ENCODE measurements at regions of chr17 and their contacts with region 1.

Region 1: GRCh38 chr17:3004133-3004801 is 59.1 kb downstream of the OR1D5 start:
- DNase-seq: peak; percentile 89 to 99
- H3K4me3 ChIP-seq: peak overlapping the region; percentile 6; the same call in 1 of the 2 replicates
- H3K27ac ChIP-seq: peak overlapping the region; percentile 65
- H3K4me1 ChIP-seq: peaks cover 22% of the 10 kb centered on the region
- H3K27me3 ChIP-seq: no peaks in the 10 kb centered on the region
- CTCF ChIP-seq: no peak

Region 2: DNA sequence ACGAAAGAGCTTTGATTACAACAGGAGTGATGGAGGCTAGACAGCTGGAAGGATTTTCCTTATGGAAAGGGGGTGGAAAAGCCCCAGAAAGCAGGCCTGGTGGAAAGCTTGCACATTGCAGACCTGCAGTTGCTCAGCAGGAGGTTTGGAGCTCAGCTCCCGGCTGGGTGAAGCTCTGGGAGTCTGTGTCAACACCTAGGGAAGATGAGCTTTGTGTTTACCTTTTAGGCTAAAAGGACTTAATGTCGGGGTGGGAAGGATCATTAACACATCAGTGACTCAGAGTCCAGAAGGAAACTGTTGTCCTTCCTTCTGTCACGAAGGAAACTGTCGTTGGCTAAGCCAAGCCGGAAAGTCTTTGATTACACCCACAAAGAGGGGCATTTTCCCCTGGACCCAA is 159.9 kb before region 1 on chr17:
- CTCF ChIA-PET with region 1: interaction called, 3 read pairs
- POLR2A ChIA-PET with region 1: no interaction called
- intact Hi-C with region 1: loop called (anchors 2 kb)
- DNase-seq: peak in 1 of 2 experiments; percentile 49
- H3K4me3 ChIP-seq: no peak overlapping the region
- H3K27ac ChIP-seq: no peak overlapping the region
- H3K4me1 ChIP-seq: 0 out of 2 replicates have a peak, but pooled peaks cover 9% of the 10 kb centered on the region
- H3K27me3 ChIP-seq: no peaks in the 10 kb centered on the region
- CTCF ChIP-seq: no peak

Region 3: DNA sequence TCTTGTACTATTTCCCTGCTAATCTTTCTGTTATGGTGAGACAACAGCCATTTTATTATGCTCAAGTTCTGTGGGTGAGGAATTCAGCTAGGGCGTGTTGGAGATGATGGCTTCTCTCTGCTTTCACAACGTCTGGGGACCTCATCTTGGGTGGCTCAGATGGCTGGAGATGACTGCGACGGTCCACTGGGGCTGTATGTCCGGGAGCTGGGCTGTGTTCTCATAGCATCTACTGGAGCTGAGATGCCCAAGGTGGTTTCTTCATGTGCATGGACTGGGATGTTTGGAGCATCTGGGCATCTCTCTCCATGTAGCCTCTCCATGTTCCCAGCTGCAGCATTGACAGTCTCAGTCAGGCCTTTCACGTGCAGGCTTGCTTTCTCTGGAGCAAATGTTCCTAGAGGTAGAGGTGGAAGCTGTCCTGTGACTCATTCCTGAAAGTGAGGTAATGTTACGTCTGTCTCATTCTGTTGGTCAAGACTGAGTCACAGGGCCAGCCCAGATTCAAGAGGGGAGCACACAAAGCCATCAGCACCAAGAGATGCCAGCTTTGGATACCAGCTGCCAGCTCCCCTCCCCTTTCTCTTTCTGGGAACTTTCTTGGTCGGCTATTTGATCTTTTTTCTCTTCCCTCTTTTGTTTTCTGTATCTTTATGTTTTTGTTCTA is 111.8 kb before region 1 on chr17:
- CTCF ChIA-PET with region 1: interaction called, 6 read pairs
- POLR2A ChIA-PET with region 1: no interaction called
- intact Hi-C with region 1: loop called (anchors 1 kb)
- DNase-seq: peak; percentile 77 to 90
- H3K4me3 ChIP-seq: no peak overlapping the region
- H3K27ac ChIP-seq: peak overlapping the region; percentile 84
- H3K4me1 ChIP-seq: peaks cover 44% of the 10 kb centered on the region
- H3K27me3 ChIP-seq: no peaks in the 10 kb centered on the region
- CTCF ChIP-seq: no peak

Region 4: DNA sequence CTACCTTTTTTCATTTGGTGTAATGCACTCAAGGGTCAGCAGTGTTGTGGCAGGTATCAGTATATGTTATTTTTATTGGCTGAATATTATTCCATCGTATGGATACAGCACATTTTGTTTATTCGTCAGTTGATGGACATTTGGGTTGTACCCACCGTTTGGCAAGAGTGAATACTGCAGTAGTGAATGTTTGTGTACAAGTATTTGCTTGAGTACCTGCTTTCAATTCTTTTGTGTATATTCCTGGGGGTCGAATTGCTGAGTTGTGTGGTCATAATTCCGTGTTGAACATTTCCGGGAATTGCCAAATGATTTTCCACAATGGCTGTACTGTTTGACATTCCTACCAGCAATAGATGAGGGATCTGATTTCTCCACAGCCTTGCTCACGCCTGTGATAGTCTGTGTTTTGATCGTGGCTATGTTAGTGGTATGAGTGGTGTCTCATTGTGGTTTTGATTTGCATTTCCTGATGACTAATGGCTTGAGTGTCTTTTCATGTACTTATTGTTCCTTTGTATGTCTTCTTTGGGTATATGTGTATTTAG is 49.3 kb before region 1 on chr17:
- CTCF ChIA-PET with region 1: no interaction called
- POLR2A ChIA-PET with region 1: interaction called, 3 read pairs
- intact Hi-C with region 1: loop called (anchors 1 kb)
- DNase-seq: peak; percentile 80 to 99
- H3K4me3 ChIP-seq: no peak overlapping the region
- H3K27ac ChIP-seq: peak overlapping the region; percentile 77
- H3K4me1 ChIP-seq: peaks cover 47% of the 10 kb centered on the region
- H3K27me3 ChIP-seq: no peaks in the 10 kb centered on the region
- CTCF ChIP-seq: no peak

Region 5: GRCh38 chr17:2982854-2983253 is 21.4 kb before region 1 on chr17:
- CTCF ChIA-PET with region 1: no interaction called
- POLR2A ChIA-PET with region 1: no interaction called
- intact Hi-C with region 1: no loop called
- DNase-seq: no peak
- H3K4me3 ChIP-seq: no peak overlapping the region
- H3K27ac ChIP-seq: no peak overlapping the region
- H3K4me1 ChIP-seq: no peaks in the 10 kb centered on the region
- H3K27me3 ChIP-seq: no peaks in the 10 kb centered on the region
- CTCF ChIP-seq: no peak

Region 6: DNA sequence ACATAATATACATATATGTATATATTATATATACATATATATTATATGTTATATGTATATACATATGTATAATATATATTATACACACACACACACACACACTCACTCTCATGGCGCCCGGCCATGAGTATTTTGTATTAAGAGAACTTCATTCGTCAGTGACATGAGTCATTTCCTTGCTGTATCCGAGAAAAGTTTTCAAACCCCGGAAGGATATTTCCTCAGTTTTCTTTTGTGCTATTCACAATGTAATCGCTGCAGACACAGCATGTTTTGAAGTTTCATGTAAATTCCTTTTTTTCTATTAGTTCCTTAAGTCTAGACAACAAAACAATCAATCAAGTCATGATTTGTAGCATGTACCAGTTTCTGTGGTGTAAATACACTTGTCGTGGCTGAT is 25.8 kb after region 1 on chr17:
- CTCF ChIA-PET with region 1: no interaction called
- POLR2A ChIA-PET with region 1: no interaction called
- intact Hi-C with region 1: no loop called
- DNase-seq: no peak
- H3K4me3 ChIP-seq: no peak overlapping the region
- H3K27ac ChIP-seq: no peak overlapping the region
- H3K4me1 ChIP-seq: no peaks in the 10 kb centered on the region
- H3K27me3 ChIP-seq: no peaks in the 10 kb centered on the region
- CTCF ChIP-seq: no peak

Region 7: GRCh38 chr17:3197219-3197618 is 193.0 kb after region 1 on chr17 and contains the start of gene OR1A2:
- CTCF ChIA-PET with region 1: no interaction called
- POLR2A ChIA-PET with region 1: no interaction called
- intact Hi-C with region 1: no loop called
- DNase-seq: no peak
- H3K4me3 ChIP-seq: no peak within 1 kb of the TSS
- H3K27ac ChIP-seq: no peak within 1 kb of the TSS
- H3K4me1 ChIP-seq: no peaks in the 10 kb centered on the region
- H3K27me3 ChIP-seq: peaks cover 39% of the 10 kb centered on the region
- CTCF ChIP-seq: no peak
- total RNA-seq, gene OR1A2: not detected in 2 replicates

Region 8: DNA sequence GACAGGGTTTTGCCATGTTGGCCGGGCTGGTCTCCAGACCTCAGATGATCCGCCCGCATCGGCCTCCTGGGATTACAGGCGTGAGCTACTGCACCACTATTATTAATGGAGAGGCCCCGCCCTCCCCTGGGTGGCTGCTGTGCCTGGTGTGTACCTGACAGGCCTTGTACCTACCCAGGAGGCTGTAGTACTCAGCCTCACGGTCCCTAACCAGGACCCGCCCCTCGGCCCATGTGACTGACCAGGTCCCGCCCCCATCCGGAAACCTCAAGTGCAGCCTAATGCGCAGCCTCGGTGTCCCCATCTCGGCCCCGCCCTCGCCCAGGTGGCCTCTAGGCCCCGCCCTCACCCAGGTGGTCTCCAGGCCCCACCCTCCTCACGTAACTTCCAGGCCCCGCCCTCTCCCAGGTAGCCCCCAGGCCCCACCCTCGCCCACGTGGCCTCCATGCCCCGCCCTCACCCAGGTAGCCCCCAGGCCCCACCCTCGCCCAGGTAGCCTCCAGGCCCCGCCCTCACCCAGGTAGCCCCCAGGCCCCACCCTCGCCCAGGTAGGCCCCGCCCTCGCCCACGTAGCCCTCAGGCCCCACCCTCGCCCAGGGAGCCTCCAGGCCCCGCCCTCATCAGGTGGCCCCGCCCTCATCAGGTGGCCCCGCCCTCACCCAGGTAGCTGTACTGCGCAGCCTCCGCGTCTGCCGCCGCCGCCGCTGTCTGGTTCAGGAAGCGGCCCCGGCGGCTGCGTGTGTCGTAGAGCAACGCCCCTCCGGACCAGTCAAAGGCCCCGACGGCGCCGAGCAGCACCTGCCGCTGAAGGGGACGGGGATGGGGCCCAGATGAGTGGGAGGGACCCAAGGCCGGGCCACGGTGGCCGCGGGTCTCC is 750.4 kb after region 1 on chr17:
- CTCF ChIA-PET with region 1: interaction called, 11 read pairs
- POLR2A ChIA-PET with region 1: no interaction called
- intact Hi-C with region 1: no loop called
- DNase-seq: peak; percentile 94 to 100
- H3K4me3 ChIP-seq: peak overlapping the region; percentile 94
- H3K27ac ChIP-seq: peak overlapping the region; percentile 43
- H3K4me1 ChIP-seq: peaks cover 11% of the 10 kb centered on the region
- H3K27me3 ChIP-seq: no peaks in the 10 kb centered on the region
- CTCF ChIP-seq: no peak

Measured in PC-9 (cell line).